HEK293T (cell line): ENCODE measurements at regions of chr16 and their contacts with region 1.

Region 1: GRCh38 chr16:27367461-27368357 is 34.3 kb upstream of the IL21R start:
- DNase-seq: peak; percentile 86

Region 2: GRCh38 chr16:27179500-27180072 is 188.1 kb before region 1 on chr16:
- CTCF ChIA-PET with region 1: interaction called, 10 read pairs
- POLR2A ChIA-PET with region 1: no interaction called
- DNase-seq: peak; percentile 84